ENCODE measurements at regions of chr1 and their contacts with region 1.

Region 1: GRCh38 chr1:208132287-208132883 is 111.8 kb downstream of the PLXNA2 start:
- DNase-seq: peak; percentile 90 to 97
- ATAC-seq: peak; percentile 96

Region 2: GRCh38 chr1:208184088-208184911 is 51.9 kb after region 1 on chr1:
- intact Hi-C with region 1: no loop called
- DNase-seq: peak; percentile 61 to 83
- ATAC-seq: peak; percentile 88

Region 3: GRCh38 chr1:208238710-208239472 is 106.5 kb after region 1 on chr1:
- intact Hi-C with region 1: loop called (anchors 10 kb)
- DNase-seq: no peak
- ATAC-seq: peak; percentile 15